Breast epithelium (tissue), 4 donors: ENCODE measurements at regions of chr14 and their contacts with region 1.

Region 1: DNA sequence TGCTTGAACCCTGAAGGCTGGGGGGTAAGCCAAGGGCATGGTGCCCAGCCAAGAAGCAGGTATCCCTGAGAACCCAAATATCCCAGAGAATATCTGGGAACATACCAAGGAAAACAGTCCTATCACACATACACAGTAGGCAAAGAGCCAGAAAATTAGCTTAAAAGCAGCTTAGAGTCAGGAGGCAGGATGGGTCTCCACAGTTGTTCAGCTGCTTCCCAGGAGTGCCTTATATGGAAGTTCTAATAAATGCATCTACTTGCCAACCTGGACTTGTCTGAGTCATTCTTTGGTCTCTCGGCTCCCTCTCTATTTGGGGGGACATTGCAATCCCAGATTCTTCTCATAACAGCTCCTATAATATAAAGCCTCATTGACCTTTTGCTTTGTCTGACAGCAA is 9.0 kb upstream of the GPR135 start:
- DNase-seq: no peak
- H3K4me3 ChIP-seq: no peak overlapping the region
- H3K27ac ChIP-seq: no peak overlapping the region
- H3K4me1 ChIP-seq: no peaks in the 10 kb centered on the region
- H3K27me3 ChIP-seq: no peaks in the 10 kb centered on the region
- CTCF ChIP-seq: no peak
- POLR2A ChIP-seq: no peak

Region 2: DNA sequence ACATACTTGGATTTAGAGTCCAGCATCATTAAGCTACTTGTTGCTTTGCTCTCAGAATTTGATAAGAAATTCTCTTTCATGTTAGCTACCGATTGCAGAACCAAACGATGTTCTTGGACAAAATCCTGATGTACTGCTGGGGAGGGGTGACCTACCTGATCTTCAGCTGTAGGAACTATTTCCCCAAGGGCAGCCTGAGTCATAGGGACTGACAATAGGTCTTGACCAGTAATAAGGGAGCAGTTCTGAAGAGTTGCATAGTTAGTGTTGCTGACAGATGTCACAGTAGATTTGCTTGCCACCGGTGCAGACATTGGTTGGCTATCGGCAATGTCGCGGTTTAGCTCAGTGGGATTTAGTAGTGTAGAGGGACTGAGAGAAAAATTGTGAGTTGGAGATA is 1239.3 kb after region 1 on chr14:
- intact Hi-C with region 1: loop called (anchors 10 kb)
- DNase-seq: no peak
- H3K4me3 ChIP-seq: no peak overlapping the region
- H3K27ac ChIP-seq: no peak overlapping the region
- H3K4me1 ChIP-seq: no peaks in the 10 kb centered on the region
- H3K27me3 ChIP-seq: no peaks in the 10 kb centered on the region
- CTCF ChIP-seq: no peak
- POLR2A ChIP-seq: no peak